GM10248 (cell line): ENCODE measurements at regions of chr10 and their contacts with region 1.

Region 1: GRCh38 chr10:21732067-21732772 is 198.2 kb downstream of the MLLT10 start:
- DNase-seq: peak; percentile 75
- CTCF ChIP-seq: peak; percentile 85

Region 2: GRCh38 chr10:21278491-21279239 is 453.6 kb before region 1 on chr10:
- CTCF ChIA-PET with region 1: interaction called, 21 read pairs
- POLR2A ChIA-PET with region 1: no interaction called
- DNase-seq: peak; percentile 64
- CTCF ChIP-seq: peak; percentile 70

Region 3: GRCh38 chr10:21495752-21496342 is 236.4 kb before region 1 on chr10:
- CTCF ChIA-PET with region 1: interaction called, 51 read pairs
- POLR2A ChIA-PET with region 1: no interaction called
- DNase-seq: peak; percentile 94
- CTCF ChIP-seq: peak; percentile 95

Region 4: GRCh38 chr10:21746118-21746517 is 13.9 kb after region 1 on chr10:
- CTCF ChIA-PET with region 1: interaction called, 14 read pairs
- POLR2A ChIA-PET with region 1: no interaction called
- DNase-seq: no peak
- CTCF ChIP-seq: no peak

Region 5: GRCh38 chr10:21895932-21896331 is 163.7 kb after region 1 on chr10:
- CTCF ChIA-PET with region 1: no interaction called
- POLR2A ChIA-PET with region 1: no interaction called
- DNase-seq: no peak
- CTCF ChIP-seq: no peak